ENCODE measurements at regions of chr5 and their contacts with region 1.

Region 1: DNA sequence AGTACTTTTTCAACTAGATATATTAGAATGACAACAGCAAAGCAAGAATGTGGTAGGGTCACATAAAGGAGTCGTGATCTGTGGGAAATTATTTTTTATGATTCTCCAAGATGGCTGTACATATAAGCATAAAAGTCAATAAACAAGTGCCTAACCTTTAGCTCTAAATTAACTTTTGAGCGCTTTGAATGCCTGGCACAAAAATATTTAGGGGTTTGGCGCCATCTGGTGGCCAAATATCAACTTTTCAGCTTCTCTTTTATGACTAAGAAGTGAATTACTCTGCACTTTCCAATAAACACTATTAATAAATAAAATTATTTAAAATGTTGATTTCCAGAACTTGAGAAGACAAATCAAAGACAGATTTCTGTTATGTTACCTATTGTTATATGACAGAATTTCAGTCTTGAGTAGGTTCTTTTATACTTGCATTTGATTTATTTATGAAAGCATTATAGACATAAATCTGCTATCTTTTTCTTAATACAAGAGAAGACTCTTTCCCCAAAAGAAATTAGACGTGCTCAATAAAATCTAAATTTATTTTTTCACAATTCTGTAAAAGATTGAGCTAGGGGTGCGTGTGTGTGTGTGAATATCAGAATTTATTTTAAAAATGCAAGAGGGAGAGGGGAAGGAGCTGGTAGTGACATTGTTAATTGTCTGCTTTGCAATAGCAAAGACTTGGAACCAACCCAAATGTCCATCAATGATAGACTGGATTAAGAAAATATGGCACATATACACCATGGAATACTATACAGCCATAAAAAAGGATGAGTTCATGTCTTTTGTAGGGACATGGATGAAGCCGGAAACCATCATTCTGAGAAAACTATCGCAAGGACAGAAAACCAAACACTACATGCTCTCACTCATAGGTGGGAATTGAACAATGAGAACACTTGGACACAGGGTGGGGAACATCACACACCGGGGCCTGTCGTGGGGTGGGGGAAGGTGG is 36.7 kb upstream of the ARRDC3 start:
- DNase-seq: peak; percentile 53 to 77 (median 63)
- H3K4me3 ChIP-seq: no peak overlapping the region
- H3K4me3 Mint-ChIP-seq: no peak overlapping the region
- H3K27ac ChIP-seq: no peak overlapping the region
- H3K27ac Mint-ChIP-seq: peak overlapping the region in 1 of 8 donors; percentile 7
- H3K4me1 ChIP-seq: no peaks in the 10 kb centered on the region
- H3K4me1 Mint-ChIP-seq: peaks cover 8 to 20% (median 15%) of the 10 kb centered on the region in 3 donors
- H3K27me3 ChIP-seq: no peaks in the 10 kb centered on the region
- H3K27me3 Mint-ChIP-seq: peaks cover 0 to 1% of the 10 kb centered on the region in 2 donors

Region 2: GRCh38 chr5:90866333-90866732 is 553.5 kb before region 1 on chr5:
- CTCF ChIA-PET with region 1: interaction called, 28 read pairs
- POLR2A ChIA-PET with region 1: no interaction called
- DNase-seq: peak in 2 of 5 donors; percentile 14 to 35
- H3K4me3 ChIP-seq: no peak overlapping the region
- H3K4me3 Mint-ChIP-seq: no peak overlapping the region
- H3K27ac ChIP-seq: no peak overlapping the region
- H3K27ac Mint-ChIP-seq: no peak overlapping the region
- H3K4me1 ChIP-seq: no peaks in the 10 kb centered on the region
- H3K4me1 Mint-ChIP-seq: peaks cover 0 to 3% (median 2%) of the 10 kb centered on the region in 3 donors
- H3K27me3 ChIP-seq: no peaks in the 10 kb centered on the region
- H3K27me3 Mint-ChIP-seq: peaks cover 8 to 17% of the 10 kb centered on the region in 2 donors

Region 3: DNA sequence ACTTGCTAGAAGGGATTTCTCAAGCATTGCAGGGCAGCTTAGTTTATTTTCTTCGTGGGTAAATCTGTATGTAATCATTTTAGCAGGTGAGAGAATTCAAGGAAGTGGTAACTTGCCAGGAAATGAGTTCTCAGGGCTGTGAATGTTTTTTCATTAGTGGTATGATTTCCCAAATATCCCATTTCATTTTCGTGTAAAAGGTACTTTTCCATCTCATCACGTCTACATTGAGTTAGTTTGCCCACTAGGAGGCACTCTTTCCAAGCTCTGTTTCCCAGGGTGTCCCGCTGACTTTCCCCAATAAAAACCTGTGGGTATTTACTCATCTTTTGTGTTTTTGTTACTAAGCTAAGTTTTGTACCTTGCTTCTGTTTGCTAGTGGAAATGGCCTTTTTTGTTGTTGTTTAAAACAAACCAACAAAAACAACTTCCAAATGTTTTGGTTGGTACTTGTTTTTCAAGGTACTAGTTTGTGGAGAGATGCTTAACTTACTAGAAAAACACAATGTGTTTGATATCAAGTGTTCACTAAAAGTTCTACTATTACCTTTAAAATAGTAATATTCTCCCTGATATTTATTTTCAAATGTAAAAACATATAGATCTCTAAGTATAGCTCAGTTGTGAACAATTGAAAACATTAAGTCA is 487.7 kb before region 1 on chr5:
- CTCF ChIA-PET with region 1: interaction called, 14 read pairs
- POLR2A ChIA-PET with region 1: no interaction called
- DNase-seq: peak in 3 of 5 donors; percentile 4 to 48 (median 25)
- H3K4me3 ChIP-seq: no peak overlapping the region
- H3K4me3 Mint-ChIP-seq: no peak overlapping the region
- H3K27ac ChIP-seq: no peak overlapping the region
- H3K27ac Mint-ChIP-seq: no peak overlapping the region
- H3K4me1 ChIP-seq: peaks cover 3% of the 10 kb centered on the region
- H3K4me1 Mint-ChIP-seq: peaks cover 4 to 5% (median 4%) of the 10 kb centered on the region in 3 donors
- H3K27me3 ChIP-seq: no peaks in the 10 kb centered on the region
- H3K27me3 Mint-ChIP-seq: peaks cover 8 to 17% of the 10 kb centered on the region in 2 donors

Region 4: DNA sequence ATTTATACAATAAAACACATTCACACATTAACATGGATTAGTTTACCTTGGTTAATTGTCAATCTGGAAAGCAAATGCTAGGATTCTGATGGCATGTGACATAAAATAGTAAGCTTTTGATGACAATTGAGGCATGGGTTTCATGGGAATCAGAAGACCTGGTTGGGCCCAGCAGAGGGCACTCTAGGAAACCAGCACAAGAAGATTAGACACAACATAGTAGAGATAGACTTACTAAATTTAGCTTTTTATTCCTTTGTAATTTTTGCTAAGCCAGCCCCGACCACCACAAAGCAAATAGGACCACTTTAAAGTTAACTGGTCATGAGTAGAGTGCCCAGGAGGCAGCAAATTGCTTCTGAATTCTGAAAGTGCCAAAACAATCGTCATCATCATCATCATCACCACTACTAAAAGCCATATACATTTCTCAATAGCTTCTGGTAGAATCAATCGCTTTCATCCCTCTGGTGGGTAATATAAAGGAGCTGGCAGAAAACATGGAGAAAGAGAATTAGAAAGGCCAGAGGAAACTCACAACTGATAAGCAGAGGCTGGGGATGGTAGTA is 200.0 kb before region 1 on chr5:
- CTCF ChIA-PET with region 1: interaction called, 15 read pairs
- POLR2A ChIA-PET with region 1: no interaction called
- DNase-seq: peak in 1 of 5 donors; percentile 11
- H3K4me3 ChIP-seq: no peak overlapping the region
- H3K4me3 Mint-ChIP-seq: no peak overlapping the region
- H3K27ac ChIP-seq: peak overlapping the region; percentile 26
- H3K27ac Mint-ChIP-seq: no peak overlapping the region
- H3K4me1 ChIP-seq: no peaks in the 10 kb centered on the region
- H3K4me1 Mint-ChIP-seq: no peaks in the 10 kb centered on the region
- H3K27me3 ChIP-seq: no peaks in the 10 kb centered on the region
- H3K27me3 Mint-ChIP-seq: peaks cover 0 to 21% of the 10 kb centered on the region in 2 donors

Region 5: DNA sequence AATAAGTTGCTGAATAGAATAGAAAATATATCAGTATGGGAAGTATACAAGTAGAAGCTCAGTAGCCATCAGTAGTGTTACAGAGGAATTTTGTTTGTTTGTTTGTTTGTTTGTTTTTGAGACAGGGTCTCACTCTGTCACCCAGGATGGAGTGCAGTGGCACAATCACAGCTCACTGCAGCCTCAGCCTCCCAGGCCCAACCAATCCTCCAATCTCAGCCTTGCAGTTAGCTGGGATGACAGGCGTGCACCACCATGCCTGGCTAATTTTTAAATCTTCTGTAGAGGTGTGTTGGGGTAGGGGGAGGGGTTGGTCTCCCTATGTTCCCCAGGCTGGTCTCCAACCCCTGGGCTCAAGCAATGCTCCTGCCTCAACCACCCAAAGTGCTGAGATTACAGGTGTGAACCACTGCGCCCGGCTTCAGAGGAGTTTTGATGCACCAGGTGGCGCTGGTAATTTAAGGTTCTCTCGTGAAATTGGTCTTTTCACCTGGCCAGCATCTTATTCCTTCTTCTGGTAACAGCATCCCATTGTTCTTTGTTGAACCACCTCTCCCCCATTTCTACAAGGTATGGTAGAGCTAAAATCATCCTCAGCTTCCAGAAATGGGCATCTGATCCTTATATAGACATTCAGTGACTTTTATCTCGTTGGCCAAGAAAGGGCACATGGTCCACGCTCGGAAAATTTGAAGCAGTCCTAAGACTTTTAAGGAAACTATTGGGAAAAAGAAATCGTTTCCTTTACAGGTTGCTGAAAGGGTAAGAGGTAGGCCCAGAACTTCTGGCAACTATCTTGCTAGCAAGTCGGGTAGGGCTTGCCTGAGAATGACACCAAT is 193.8 kb before region 1 on chr5:
- CTCF ChIA-PET with region 1: interaction called, 19 read pairs
- POLR2A ChIA-PET with region 1: no interaction called
- DNase-seq: peak; percentile 40 to 70 (median 46)
- H3K4me3 ChIP-seq: no peak overlapping the region
- H3K4me3 Mint-ChIP-seq: no peak overlapping the region
- H3K27ac ChIP-seq: no peak overlapping the region
- H3K27ac Mint-ChIP-seq: peak overlapping the region in 1 of 8 donors; percentile 20
- H3K4me1 ChIP-seq: no peaks in the 10 kb centered on the region
- H3K4me1 Mint-ChIP-seq: no peaks in the 10 kb centered on the region
- H3K27me3 ChIP-seq: no peaks in the 10 kb centered on the region
- H3K27me3 Mint-ChIP-seq: peaks cover 0 to 23% of the 10 kb centered on the region in 2 donors

Measured in CD8-positive, alpha-beta memory T cell (primary cell).